ENCODE measurements at regions of chr15 and their contacts with region 1.

Region 1: DNA sequence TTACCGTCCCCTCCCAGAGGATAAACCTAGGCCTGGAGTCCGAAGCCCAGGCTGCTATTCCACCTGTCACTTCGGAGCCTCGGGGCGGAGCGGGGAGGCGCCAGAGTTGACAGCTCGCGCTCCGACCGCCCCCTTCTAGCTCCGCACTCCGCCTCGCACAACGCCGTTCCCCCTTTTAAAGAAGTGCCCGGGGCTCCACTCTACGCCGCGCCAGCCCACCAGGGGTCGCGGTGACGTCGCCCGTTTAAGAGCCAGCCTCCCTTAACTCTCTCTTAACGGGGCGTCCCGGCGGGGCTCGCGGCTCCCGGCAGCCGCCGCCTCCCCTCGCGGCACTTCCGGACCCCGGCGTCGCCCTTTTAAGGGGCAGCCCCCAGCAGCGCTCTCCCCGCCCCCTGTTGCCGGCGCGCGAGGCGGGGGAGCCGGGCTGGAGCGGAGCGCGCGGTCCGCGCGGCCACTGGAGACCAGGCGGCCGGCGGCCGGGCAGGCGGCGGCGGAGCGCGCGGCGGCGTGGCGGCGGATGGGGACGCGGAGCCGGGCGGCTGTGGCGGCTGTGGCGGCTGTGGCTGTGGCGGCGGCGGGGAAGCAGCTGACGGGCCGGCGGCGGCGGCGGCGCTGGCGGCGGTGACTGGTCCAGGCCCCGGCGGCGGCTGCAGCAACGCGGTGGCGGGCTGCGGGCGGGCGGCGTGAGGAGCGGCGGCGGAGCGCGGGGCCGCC is at the start of gene INAFM2:
- DNase-seq: peak; percentile 90 to 92
- H3K4me3 ChIP-seq: peak within 1 kb of the TSS; percentile 62 to 79 (median 70)
- H3K27ac ChIP-seq: no peak within 1 kb of the TSS
- H3K4me1 ChIP-seq: peaks cover 21 to 44% (median 31%) of the 10 kb centered on the region in 4 experiments
- H3K27me3 ChIP-seq: peaks cover 0 to 20% (median 9%) of the 10 kb centered on the region in 4 experiments; a peak in 4 of 7 replicates
- CTCF ChIP-seq: peak; percentile 22 to 36 (median 30)
- EP300 ChIP-seq: peak in 1 of 2 experiments; percentile 58; a peak in 1 of 3 replicates
- POLR2A ChIP-seq: peak in 1 of 2 experiments; percentile 49; a peak in 1 of 3 replicates
- RAD21 ChIP-seq: peak in 1 of 2 experiments; percentile 20; a peak in 1 of 4 replicates
- total RNA-seq, gene INAFM2: 35.1 and 38.2 TPM in 2 replicates

Region 2: GRCh38 chr15:40282144-40282868 is 41.1 kb before region 1 on chr15:
- CTCF ChIA-PET with region 1: interaction called, 531 read pairs
- POLR2A ChIA-PET with region 1: interaction called, 6 read pairs
- DNase-seq: peak in 1 of 2 experiments; percentile 86
- H3K4me3 ChIP-seq: peak overlapping the region; percentile 21 to 61 (median 32)
- H3K27ac ChIP-seq: no peak overlapping the region
- H3K4me1 ChIP-seq: peaks cover 17 to 47% (median 34%) of the 10 kb centered on the region in 4 experiments
- H3K27me3 ChIP-seq: peaks cover 40 to 69% (median 54%) of the 10 kb centered on the region in 4 experiments
- CTCF ChIP-seq: peak in 2 of 3 experiments; percentile 38 to 60; a peak in 3 of 4 replicates
- EP300 ChIP-seq: no peak
- POLR2A ChIP-seq: no peak
- RAD21 ChIP-seq: peak; percentile 1 to 26; a peak in 2 of 4 replicates

Region 3: DNA sequence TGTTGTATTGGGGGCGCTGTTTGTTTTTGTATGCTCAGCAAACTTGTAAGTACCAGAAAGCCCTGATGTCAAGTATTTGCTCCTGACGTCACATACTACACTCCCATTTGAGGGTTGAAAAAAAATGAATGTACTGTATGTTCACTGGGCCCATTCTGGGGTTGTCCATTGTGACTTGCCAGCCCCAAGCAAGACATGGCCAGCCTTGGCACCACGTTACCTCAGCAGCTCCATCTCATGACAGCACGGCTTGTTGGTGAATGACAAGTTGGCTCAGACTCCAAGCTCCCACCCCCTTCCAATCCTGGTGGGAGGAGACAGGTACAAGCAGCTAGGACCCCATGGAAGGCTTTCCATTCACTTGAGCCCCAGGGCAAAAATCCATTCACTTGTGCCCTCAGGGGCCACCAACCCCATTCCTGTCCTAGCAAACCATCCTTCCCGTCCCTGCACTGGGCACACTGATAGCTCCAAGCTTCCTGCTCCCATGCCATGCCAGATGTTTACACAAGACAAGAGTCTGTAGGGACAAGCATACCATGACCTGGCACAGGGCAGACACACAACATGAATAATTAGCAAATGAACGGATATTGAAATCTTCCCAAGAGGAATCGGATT is 29.0 kb after region 1 on chr15:
- CTCF ChIA-PET with region 1: interaction called, 15 read pairs
- POLR2A ChIA-PET with region 1: no interaction called
- DNase-seq: no peak
- H3K4me3 ChIP-seq: no peak overlapping the region
- H3K27ac ChIP-seq: no peak overlapping the region
- H3K4me1 ChIP-seq: peaks cover 7 to 17% (median 14%) of the 10 kb centered on the region in 4 experiments
- H3K27me3 ChIP-seq: peaks cover 0 to 6% (median 4%) of the 10 kb centered on the region in 4 experiments; a peak in 3 of 7 replicates
- CTCF ChIP-seq: no peak
- EP300 ChIP-seq: no peak
- POLR2A ChIP-seq: no peak
- RAD21 ChIP-seq: no peak